Activated CD4-positive, alpha-beta memory T cell treated with anti-CD3 and anti-CD28 coated beads for 36 hours (primary cell): ENCODE measurements at regions of chr1 and their contacts with region 1.

Region 1: GRCh38 chr1:205775015-205775716 is at the start of gene RAB29:
- DNase-seq: peak; percentile 91
- H3K4me3 Mint-ChIP-seq: peak within 1 kb of the TSS; percentile 84
- H3K27ac Mint-ChIP-seq: peak within 1 kb of the TSS; percentile 94
- H3K4me1 Mint-ChIP-seq: peaks cover 52% of the 10 kb centered on the region
- H3K27me3 Mint-ChIP-seq: no peaks in the 10 kb centered on the region
- total RNA-seq, gene RAB29: 31.5 to 31.6 TPM

Region 2: DNA sequence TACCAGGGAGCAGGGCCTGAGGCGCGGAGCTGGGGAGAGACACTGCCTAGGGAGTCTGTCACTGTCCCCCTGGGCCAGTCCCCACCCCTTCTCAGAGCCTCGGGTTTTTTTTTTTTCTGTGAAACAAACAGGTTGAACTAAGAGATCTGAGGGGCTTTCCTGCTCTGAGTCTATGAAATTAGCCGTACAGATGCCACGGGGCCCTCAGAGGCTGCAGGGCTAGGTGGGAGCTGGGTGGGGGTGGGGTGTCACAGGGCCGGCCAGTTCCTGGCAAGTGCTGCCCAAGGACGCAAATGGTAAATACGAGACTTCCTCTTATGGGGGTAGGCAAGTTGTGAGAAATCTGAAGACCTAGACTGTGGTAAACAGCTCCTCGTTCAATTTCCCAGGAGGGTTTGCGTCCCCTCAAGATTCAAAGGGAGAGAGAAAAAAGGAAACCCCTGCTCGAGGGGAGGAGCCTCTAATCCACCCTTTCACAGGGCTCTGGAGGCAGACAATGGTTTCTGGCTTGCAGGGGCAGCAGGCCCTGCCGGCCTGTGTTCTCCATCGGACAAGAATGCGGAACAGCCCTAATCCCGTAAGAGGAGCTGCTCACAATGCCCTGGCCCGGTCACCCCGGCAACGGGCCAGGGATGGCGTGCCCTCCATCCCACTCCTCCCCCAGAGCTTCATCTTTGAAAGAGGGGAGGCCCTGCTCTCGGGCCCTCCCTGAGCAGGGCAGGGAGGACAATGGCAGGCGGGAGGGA is 461.4 kb before region 1 on chr1:
- CTCF ChIA-PET with region 1: no interaction called
- POLR2A ChIA-PET with region 1: no interaction called
- intact Hi-C with region 1: loop called (anchors 10 kb)
- DNase-seq: peak; percentile 70
- H3K4me3 Mint-ChIP-seq: peak overlapping the region; percentile 81
- H3K27ac Mint-ChIP-seq: peak overlapping the region; percentile 95
- H3K4me1 Mint-ChIP-seq: peaks cover 86% of the 10 kb centered on the region
- H3K27me3 Mint-ChIP-seq: no peaks in the 10 kb centered on the region

Region 3: GRCh38 chr1:205711104-205712020 is 63.8 kb before region 1 on chr1:
- CTCF ChIA-PET with region 1: interaction called, 7 read pairs
- POLR2A ChIA-PET with region 1: interaction called, 4 read pairs
- intact Hi-C with region 1: loop called (anchors 2 kb)
- DNase-seq: peak; percentile 57
- H3K4me3 Mint-ChIP-seq: no peak overlapping the region
- H3K27ac Mint-ChIP-seq: peak overlapping the region; percentile 50
- H3K4me1 Mint-ChIP-seq: peaks cover 9% of the 10 kb centered on the region
- H3K27me3 Mint-ChIP-seq: no peaks in the 10 kb centered on the region

Region 4: GRCh38 chr1:205750138-205751035 is 24.8 kb before region 1 on chr1 and contains the start of gene NUCKS1:
- CTCF ChIA-PET with region 1: interaction called, 4 read pairs
- POLR2A ChIA-PET with region 1: interaction called, 25 read pairs
- intact Hi-C with region 1: loop called (anchors 1 kb)
- DNase-seq: peak; percentile 98
- H3K4me3 Mint-ChIP-seq: peak within 1 kb of the TSS; percentile 93
- H3K27ac Mint-ChIP-seq: peak within 1 kb of the TSS; percentile 99
- H3K4me1 Mint-ChIP-seq: peaks cover 30% of the 10 kb centered on the region
- H3K27me3 Mint-ChIP-seq: peaks cover 1% of the 10 kb centered on the region
- total RNA-seq, gene NUCKS1: 149 to 202 TPM

Region 5: GRCh38 chr1:205805082-205805712 is 30.0 kb after region 1 on chr1:
- CTCF ChIA-PET with region 1: no interaction called
- POLR2A ChIA-PET with region 1: interaction called, 3 read pairs
- intact Hi-C with region 1: loop called (anchors 1 kb)
- DNase-seq: peak; percentile 80
- H3K4me3 Mint-ChIP-seq: peak overlapping the region; percentile 63
- H3K27ac Mint-ChIP-seq: peak overlapping the region; percentile 88
- H3K4me1 Mint-ChIP-seq: peaks cover 56% of the 10 kb centered on the region
- H3K27me3 Mint-ChIP-seq: no peaks in the 10 kb centered on the region